T-cell (primary cell): ENCODE measurements at regions of chr17 and their contacts with region 1.

Region 1: GRCh38 chr17:68377862-68378770 is 79.2 kb downstream of the WIPI1 start:
- DNase-seq: no peak
- ATAC-seq: no peak
- H3K4me3 ChIP-seq: no peak overlapping the region
- H3K4me3 Mint-ChIP-seq: no peak overlapping the region
- H3K27ac ChIP-seq: no peak overlapping the region
- H3K27ac Mint-ChIP-seq: no peak overlapping the region
- H3K4me1 ChIP-seq: peaks cover under 1 to 2% of the 10 kb centered on the region in 2 experiments
- H3K4me1 Mint-ChIP-seq: peaks cover 9 to 17% (median 11%) of the 10 kb centered on the region in 3 donors
- H3K27me3 ChIP-seq: no peaks in the 10 kb centered on the region
- H3K27me3 Mint-ChIP-seq: no peaks in the 10 kb centered on the region

Region 2: GRCh38 chr17:68182011-68182306 is 196.2 kb before region 1 on chr17:
- CTCF ChIA-PET with region 1: no interaction called
- POLR2A ChIA-PET with region 1: no interaction called
- DNase-seq: peak in 1 of 35 experiments; percentile 36
- ATAC-seq: no peak
- H3K4me3 ChIP-seq: peak overlapping the region; percentile 64 to 70
- H3K4me3 Mint-ChIP-seq: peak overlapping the region; percentile 86 to 94 (median 91)
- H3K27ac ChIP-seq: peak overlapping the region; percentile 34
- H3K27ac Mint-ChIP-seq: peak overlapping the region; percentile 84 to 95
- H3K4me1 ChIP-seq: peaks cover 39 to 58% of the 10 kb centered on the region in 2 experiments
- H3K4me1 Mint-ChIP-seq: peaks cover 54 to 66% (median 56%) of the 10 kb centered on the region in 3 donors
- H3K27me3 ChIP-seq: no peaks in the 10 kb centered on the region
- H3K27me3 Mint-ChIP-seq: no peaks in the 10 kb centered on the region

Region 3: DNA sequence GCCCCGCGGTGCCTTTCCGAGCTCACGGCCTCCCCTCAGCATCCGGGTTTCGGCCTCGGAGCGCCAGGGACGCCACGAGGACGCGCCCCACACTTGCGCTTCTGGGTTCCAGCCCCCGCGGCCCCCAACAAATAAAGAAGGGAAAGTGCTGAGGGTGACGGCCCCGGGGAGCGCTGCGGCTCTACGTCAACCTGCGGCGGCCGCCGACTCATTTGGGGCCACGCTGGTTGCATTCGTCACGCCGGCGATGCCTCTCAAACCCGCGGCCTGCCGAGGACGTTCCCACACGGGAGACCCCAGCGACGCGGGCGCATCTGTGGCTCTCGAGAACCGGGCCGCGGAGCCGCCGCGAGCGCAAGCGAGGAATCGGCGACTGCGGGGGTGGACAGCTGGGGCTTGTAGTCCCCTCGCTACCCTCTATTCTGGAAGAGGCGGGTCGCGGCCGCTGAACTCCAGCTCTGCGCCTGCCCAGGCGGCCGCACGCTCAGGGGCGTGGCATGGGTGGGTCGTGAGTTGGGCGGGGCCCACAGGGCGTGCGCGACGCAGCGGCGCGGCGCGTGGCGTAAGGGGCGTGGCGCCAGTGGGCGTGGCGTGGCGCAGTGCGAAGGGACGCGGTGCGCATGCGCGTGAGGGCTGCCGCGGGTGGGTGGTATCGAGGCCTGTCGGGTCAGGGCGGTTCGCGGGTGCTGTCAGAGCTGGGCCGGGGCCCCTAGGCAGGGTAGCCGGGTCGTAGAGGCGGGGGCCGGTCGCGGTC is 130.5 kb before region 1 on chr17 and contains the start of gene AMZ2:
- CTCF ChIA-PET with region 1: no interaction called
- POLR2A ChIA-PET with region 1: interaction called in 1 of 2 experiments, 10 read pairs
- DNase-seq: peak; percentile 88 to 99 (median 94)
- ATAC-seq: peak; percentile 88 to 95 (median 91)
- H3K4me3 ChIP-seq: peak within 1 kb of the TSS; percentile 69 to 77
- H3K4me3 Mint-ChIP-seq: peak within 1 kb of the TSS; percentile 78 to 93 (median 84)
- H3K27ac ChIP-seq: peak within 1 kb of the TSS; percentile 97
- H3K27ac Mint-ChIP-seq: peak within 1 kb of the TSS; percentile 92 to 99
- H3K4me1 ChIP-seq: peaks cover 4 to 42% of the 10 kb centered on the region in 2 experiments
- H3K4me1 Mint-ChIP-seq: peaks cover 30 to 56% (median 36%) of the 10 kb centered on the region in 3 donors
- H3K27me3 ChIP-seq: no peaks in the 10 kb centered on the region
- H3K27me3 Mint-ChIP-seq: no peaks in the 10 kb centered on the region
- total RNA-seq, gene AMZ2: 50.9 to 81.8 (median 60.5) TPM

Region 4: DNA sequence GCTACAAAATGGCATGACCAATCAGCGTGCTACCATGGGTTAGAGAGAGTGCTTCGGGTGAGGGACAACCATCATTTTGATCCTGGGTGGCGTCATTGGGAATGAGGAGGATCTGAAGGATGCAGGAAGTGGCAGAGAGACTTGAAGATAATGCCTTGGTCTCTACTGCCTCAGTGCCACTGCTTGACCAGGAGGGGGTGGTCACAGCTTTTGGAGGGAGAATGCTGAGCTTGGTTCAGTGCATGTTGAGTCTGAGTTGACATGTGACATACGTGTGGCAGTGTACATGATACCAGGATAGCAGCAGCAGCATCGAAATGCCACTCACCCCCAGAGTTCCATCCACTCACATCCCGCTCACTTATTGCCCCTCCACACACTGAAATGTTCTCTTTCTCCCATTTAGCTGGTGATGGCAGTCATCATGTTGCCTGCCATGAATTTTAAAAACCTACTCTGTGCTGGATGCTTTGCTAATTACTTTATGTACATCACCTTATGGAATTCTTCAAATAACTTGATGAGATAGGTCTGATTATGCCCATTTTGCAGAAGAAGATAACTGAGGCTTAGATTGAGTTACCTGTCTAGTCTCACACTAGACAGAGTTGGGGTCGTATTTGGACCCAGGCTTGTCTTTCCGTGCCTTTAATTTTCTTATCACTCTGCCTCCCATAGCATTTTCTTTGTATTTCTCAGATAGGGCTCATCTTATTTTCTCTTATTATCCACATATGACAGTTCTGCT is 50.1 kb before region 1 on chr17:
- CTCF ChIA-PET with region 1: no interaction called
- POLR2A ChIA-PET with region 1: no interaction called
- DNase-seq: no peak
- ATAC-seq: no peak
- H3K4me3 ChIP-seq: no peak overlapping the region
- H3K4me3 Mint-ChIP-seq: no peak overlapping the region
- H3K27ac ChIP-seq: no peak overlapping the region
- H3K27ac Mint-ChIP-seq: no peak overlapping the region
- H3K4me1 ChIP-seq: peaks cover 0 to 14% of the 10 kb centered on the region in 2 experiments
- H3K4me1 Mint-ChIP-seq: peaks cover 23 to 33% (median 26%) of the 10 kb centered on the region in 3 donors
- H3K27me3 ChIP-seq: peaks cover 0 to 4% of the 10 kb centered on the region in 2 experiments
- H3K27me3 Mint-ChIP-seq: no peaks in the 10 kb centered on the region

Region 5: GRCh38 chr17:68657166-68657565 is 279.1 kb after region 1 on chr17:
- CTCF ChIA-PET with region 1: no interaction called
- POLR2A ChIA-PET with region 1: no interaction called
- DNase-seq: no peak
- ATAC-seq: no peak
- H3K4me3 ChIP-seq: no peak overlapping the region
- H3K4me3 Mint-ChIP-seq: no peak overlapping the region
- H3K27ac ChIP-seq: no peak overlapping the region
- H3K27ac Mint-ChIP-seq: no peak overlapping the region
- H3K4me1 ChIP-seq: no peaks in the 10 kb centered on the region
- H3K4me1 Mint-ChIP-seq: no peaks in the 10 kb centered on the region
- H3K27me3 ChIP-seq: peaks cover 0 to 2% of the 10 kb centered on the region in 2 experiments
- H3K27me3 Mint-ChIP-seq: peaks cover 3 to 16% of the 10 kb centered on the region in 2 donors